ENCODE measurements at regions of chr3 and their contacts with region 1.

Region 1: DNA sequence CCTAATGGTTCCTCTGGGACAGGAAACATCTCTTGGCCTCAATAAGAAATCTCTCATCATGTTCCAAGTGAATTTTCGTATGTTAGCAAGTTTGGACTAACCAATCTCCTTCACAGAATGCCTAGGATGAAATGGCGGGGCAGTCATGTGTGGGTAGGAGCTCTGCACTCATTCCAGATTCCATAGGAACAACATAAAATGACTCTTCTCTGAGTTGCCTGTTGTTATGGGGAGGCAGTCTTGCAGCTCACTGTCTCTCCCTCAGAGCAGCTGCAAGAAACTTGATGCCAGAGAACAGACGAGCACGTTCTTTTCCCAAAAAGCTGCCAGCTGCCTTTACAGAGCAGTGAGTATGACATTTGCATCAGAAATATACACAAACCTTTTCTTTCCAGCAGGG is 34.1 kb downstream of the SPATA12 start:
- DNase-seq: peak; percentile 24

Region 2: GRCh38 chr3:57244946-57245345 is 150.4 kb after region 1 on chr3:
- in situ Hi-C with region 1: no loop called
- DNase-seq: no peak

Region 3: DNA sequence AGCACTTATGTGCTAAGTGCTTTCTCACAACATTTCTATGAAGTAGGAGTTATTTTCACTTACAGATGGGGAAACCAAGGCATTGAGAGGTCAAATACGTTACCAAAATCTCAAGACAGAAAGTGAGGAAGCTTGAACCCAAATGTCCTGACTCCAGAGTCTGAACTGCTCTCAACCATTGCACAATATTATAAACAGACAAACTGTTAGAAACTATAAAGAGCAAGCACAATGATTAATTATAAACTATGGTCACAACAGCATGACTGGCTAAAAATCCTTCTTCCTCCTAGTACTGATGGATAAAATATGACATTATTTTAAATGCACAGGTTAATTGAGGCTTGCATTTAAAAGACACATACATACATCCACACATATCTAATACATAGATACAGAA is 275.8 kb after region 1 on chr3:
- in situ Hi-C with region 1: loop called (anchors 10 kb)
- DNase-seq: no peak